ENCODE measurements at regions of chr1 and their contacts with region 1.

Region 1: DNA sequence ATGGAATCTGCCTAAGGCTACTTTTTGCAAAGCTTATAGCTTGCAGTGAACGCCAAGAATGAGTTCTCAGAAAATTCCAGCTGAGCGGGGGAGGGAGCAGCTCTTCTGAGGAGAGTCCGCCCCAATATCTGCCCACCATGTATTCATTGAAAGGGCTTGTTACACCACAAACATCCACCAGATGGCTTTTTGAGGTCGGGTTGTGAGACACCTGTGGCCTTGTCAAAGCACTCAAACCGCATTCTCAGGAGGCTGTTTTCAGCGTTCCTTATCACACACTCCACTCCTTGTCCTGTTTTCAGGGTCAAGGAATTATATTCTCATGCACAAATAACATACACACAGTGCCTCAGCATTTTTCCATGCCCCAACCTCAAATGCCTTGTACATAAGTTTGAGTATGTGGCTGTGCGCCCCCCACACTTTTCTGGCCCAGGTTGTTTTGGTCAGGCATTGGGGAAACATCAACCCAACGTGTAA is 3.9 kb upstream of the C4BPB start:
- DNase-seq: peak; percentile 84 to 87
- H3K4me3 ChIP-seq: no peak overlapping the region
- H3K4me3 Mint-ChIP-seq: peak overlapping the region; percentile 46
- H3K27ac Mint-ChIP-seq: peak overlapping the region; percentile 62
- H3K4me1 ChIP-seq: peaks cover 59% of the 10 kb centered on the region
- H3K4me1 Mint-ChIP-seq: peaks cover 56% of the 10 kb centered on the region
- H3K27me3 ChIP-seq: no peaks in the 10 kb centered on the region
- H3K27me3 Mint-ChIP-seq: no peaks in the 10 kb centered on the region
- CTCF ChIP-seq: peak; percentile 77 to 80

Region 2: DNA sequence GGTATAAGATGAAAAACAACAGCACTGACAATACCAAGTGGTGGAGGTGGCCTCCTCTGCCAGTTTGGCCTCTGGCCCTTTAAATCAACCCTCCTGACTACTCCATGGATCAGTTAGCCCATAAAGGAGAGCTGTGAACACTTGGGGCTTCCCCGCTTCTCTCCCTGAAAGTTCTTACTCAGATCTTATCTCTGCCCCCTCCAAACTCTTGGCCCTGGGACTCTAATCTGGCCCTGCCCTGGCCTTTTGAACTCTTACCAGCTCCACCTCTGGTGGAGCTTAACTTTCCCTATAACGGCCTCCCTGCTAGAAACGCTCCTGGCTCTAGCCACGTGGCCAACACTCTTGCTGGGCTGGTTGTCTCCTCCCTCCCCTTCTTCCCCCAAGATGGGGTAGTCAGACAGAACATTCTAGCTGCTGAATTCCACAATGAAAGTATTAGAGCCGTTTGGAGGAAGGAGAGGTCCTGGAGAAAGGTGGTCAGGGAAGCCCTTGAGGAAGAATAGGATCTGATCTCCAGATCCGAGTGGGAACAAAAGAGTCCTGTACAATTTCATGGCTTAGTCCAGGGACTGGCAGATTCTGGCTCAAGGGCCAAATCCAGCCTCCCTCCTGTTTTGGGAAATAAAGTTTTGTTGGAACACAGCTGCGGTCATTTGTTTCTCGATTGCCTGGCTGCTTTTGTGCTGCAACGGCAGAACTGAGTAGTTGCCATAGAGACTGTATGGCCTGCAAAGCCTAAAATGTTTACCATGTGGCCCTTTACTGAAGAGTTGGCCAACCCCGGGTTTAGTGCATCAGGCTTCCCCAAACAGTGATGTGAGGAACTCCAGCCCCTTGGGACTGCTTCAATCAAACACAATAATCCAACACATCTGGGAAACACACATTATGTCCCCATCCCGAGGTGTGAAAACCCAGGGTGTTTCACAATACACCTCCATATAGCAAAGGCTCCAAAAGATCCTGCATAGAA is 129.0 kb before region 1 on chr1:
- CTCF ChIA-PET with region 1: no interaction called
- POLR2A ChIA-PET with region 1: no interaction called
- intact Hi-C with region 1: no loop called
- DNase-seq: peak; percentile 32 to 65
- H3K4me3 ChIP-seq: no peak overlapping the region
- H3K4me3 Mint-ChIP-seq: peak overlapping the region; percentile 29
- H3K27ac Mint-ChIP-seq: peak overlapping the region; percentile 36
- H3K4me1 ChIP-seq: peaks cover 52% of the 10 kb centered on the region
- H3K4me1 Mint-ChIP-seq: peaks cover 41% of the 10 kb centered on the region
- H3K27me3 ChIP-seq: no peaks in the 10 kb centered on the region
- H3K27me3 Mint-ChIP-seq: no peaks in the 10 kb centered on the region
- CTCF ChIP-seq: no peak

Region 3: GRCh38 chr1:207052911-207053769 is 31.6 kb before region 1 on chr1 and contains the start of gene PFKFB2:
- CTCF ChIA-PET with region 1: no interaction called
- POLR2A ChIA-PET with region 1: interaction called, 8 read pairs
- intact Hi-C with region 1: loop called (anchors 2 kb)
- DNase-seq: peak; percentile 100
- H3K4me3 ChIP-seq: peak within 1 kb of the TSS; percentile 73
- H3K4me3 Mint-ChIP-seq: peak within 1 kb of the TSS; percentile 94
- H3K27ac Mint-ChIP-seq: peak within 1 kb of the TSS; percentile 97
- H3K4me1 ChIP-seq: peaks cover 4% of the 10 kb centered on the region
- H3K4me1 Mint-ChIP-seq: peaks cover 15% of the 10 kb centered on the region
- H3K27me3 ChIP-seq: no peaks in the 10 kb centered on the region
- H3K27me3 Mint-ChIP-seq: no peaks in the 10 kb centered on the region
- CTCF ChIP-seq: no peak
- total RNA-seq, gene PFKFB2: 36.4 and 38.9 TPM in 2 replicates

Region 4: DNA sequence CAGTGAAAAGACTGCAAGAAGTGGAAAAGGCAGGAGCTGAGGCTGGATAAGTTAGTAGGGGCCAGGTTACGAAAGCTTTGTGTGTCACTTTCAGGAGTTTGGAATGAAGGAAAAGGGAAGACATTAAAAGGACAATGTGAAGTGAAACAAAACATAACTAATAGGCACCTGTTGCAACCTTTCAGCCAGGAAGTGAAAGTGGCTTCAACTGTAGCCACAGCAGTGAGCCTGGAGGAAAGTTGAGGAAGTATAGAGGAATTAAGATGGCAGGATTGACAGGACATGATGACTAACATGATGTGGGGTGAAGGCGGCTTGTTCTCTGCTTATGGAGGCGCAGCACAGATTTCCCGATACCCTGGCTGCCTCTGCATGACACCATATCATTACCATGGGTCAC is 88.1 kb after region 1 on chr1:
- CTCF ChIA-PET with region 1: no interaction called
- POLR2A ChIA-PET with region 1: no interaction called
- intact Hi-C with region 1: loop called (anchors 2 kb)
- DNase-seq: no peak
- H3K4me3 ChIP-seq: no peak overlapping the region
- H3K4me3 Mint-ChIP-seq: no peak overlapping the region
- H3K27ac Mint-ChIP-seq: peak overlapping the region; percentile 5
- H3K4me1 ChIP-seq: peaks cover 11% of the 10 kb centered on the region
- H3K4me1 Mint-ChIP-seq: peaks cover 14% of the 10 kb centered on the region
- H3K27me3 ChIP-seq: no peaks in the 10 kb centered on the region
- H3K27me3 Mint-ChIP-seq: no peaks in the 10 kb centered on the region
- CTCF ChIP-seq: no peak

Region 5: GRCh38 chr1:207321079-207321789 is 236.5 kb after region 1 on chr1 and contains the start of gene CD55:
- CTCF ChIA-PET with region 1: interaction called, 4 read pairs
- POLR2A ChIA-PET with region 1: interaction called, 21 read pairs
- intact Hi-C with region 1: loop called (anchors 1 kb)
- DNase-seq: peak; percentile 99
- H3K4me3 ChIP-seq: peak within 1 kb of the TSS; percentile 80
- H3K4me3 Mint-ChIP-seq: peak within 1 kb of the TSS; percentile 83
- H3K27ac Mint-ChIP-seq: peak within 1 kb of the TSS; percentile 95
- H3K4me1 ChIP-seq: peaks cover 39% of the 10 kb centered on the region
- H3K4me1 Mint-ChIP-seq: peaks cover 17% of the 10 kb centered on the region
- H3K27me3 ChIP-seq: no peaks in the 10 kb centered on the region
- H3K27me3 Mint-ChIP-seq: no peaks in the 10 kb centered on the region
- CTCF ChIP-seq: peak; percentile 34 to 41
- total RNA-seq, gene CD55: 195 and 197 TPM in 2 replicates

Region 6: DNA sequence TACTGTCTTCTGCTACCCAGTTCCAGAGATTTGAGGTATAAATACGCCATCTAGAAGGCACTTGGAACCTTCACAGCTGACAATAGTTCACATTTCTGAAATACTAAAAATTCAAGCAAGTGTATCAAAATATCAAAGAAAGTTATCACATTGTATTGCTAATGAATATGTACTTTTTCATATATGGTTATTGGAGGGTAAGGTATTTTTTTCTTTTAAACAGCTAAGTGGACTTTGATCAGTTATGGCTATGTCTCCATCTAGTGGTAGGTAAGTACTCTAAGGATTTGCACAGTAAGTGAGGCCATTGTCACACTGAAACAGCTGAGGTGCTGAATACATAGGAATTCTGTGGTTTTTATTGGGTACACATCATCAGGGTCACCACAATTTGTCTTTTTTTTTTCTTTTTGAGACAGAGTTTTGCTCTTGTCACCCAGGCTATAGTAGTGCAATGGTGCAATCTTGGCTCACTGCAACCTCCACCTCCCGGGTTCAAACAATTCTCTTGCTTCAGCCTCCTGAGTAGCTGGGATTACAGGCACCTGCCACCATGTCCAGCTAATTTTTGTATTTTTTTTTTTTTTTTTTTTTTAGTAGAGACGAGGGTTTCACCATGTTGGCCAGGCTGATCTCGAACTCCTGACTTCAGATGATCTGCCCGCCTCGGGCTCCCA is 320.2 kb after region 1 on chr1:
- CTCF ChIA-PET with region 1: interaction called, 14 read pairs
- POLR2A ChIA-PET with region 1: interaction called, 3 read pairs
- intact Hi-C with region 1: loop called (anchors 1 kb)
- DNase-seq: peak in 1 of 2 experiments; percentile 35
- H3K4me3 ChIP-seq: no peak overlapping the region
- H3K4me3 Mint-ChIP-seq: no peak overlapping the region
- H3K27ac Mint-ChIP-seq: no peak overlapping the region
- H3K4me1 ChIP-seq: 0 out of 2 replicates have a peak, but pooled peaks cover 4% of the 10 kb centered on the region
- H3K4me1 Mint-ChIP-seq: no peaks in the 10 kb centered on the region
- H3K27me3 ChIP-seq: no peaks in the 10 kb centered on the region
- H3K27me3 Mint-ChIP-seq: no peaks in the 10 kb centered on the region
- CTCF ChIP-seq: peak; percentile 58 to 76